Activated CD4-positive, alpha-beta T cell treated with anti-CD3 and anti-CD28 coated beads, Interleukin-2, amount 10 ng/mL, durations not matched to agents 24 days and 14 days (primary cell): ENCODE measurements at regions of chr12 and their contacts with region 1.

Region 1: GRCh38 chr12:96906849-96907670 is at the start of gene NEDD1:
- DNase-seq: peak; percentile 96
- H3K4me3 Mint-ChIP-seq: peak within 1 kb of the TSS; percentile 97
- H3K27ac Mint-ChIP-seq: peak within 1 kb of the TSS; percentile 98
- H3K4me1 Mint-ChIP-seq: peaks cover 44% of the 10 kb centered on the region
- H3K27me3 Mint-ChIP-seq: peaks cover 10% of the 10 kb centered on the region
- total RNA-seq, gene NEDD1: 58.8 and 62.7 TPM in 2 replicates

Region 2: GRCh38 chr12:95858479-95859343 is 1048.3 kb before region 1 on chr12 and contains the start of gene SNRPF:
- intact Hi-C with region 1: loop called (anchors 5 kb)
- DNase-seq: peak; percentile 98
- H3K4me3 Mint-ChIP-seq: peak within 1 kb of the TSS; percentile 41
- H3K27ac Mint-ChIP-seq: no peak within 1 kb of the TSS
- H3K4me1 Mint-ChIP-seq: peaks cover 17% of the 10 kb centered on the region
- H3K27me3 Mint-ChIP-seq: peaks cover 11% of the 10 kb centered on the region
- total RNA-seq, gene SNRPF: 64.3 and 68.8 TPM in 2 replicates

Region 3: DNA sequence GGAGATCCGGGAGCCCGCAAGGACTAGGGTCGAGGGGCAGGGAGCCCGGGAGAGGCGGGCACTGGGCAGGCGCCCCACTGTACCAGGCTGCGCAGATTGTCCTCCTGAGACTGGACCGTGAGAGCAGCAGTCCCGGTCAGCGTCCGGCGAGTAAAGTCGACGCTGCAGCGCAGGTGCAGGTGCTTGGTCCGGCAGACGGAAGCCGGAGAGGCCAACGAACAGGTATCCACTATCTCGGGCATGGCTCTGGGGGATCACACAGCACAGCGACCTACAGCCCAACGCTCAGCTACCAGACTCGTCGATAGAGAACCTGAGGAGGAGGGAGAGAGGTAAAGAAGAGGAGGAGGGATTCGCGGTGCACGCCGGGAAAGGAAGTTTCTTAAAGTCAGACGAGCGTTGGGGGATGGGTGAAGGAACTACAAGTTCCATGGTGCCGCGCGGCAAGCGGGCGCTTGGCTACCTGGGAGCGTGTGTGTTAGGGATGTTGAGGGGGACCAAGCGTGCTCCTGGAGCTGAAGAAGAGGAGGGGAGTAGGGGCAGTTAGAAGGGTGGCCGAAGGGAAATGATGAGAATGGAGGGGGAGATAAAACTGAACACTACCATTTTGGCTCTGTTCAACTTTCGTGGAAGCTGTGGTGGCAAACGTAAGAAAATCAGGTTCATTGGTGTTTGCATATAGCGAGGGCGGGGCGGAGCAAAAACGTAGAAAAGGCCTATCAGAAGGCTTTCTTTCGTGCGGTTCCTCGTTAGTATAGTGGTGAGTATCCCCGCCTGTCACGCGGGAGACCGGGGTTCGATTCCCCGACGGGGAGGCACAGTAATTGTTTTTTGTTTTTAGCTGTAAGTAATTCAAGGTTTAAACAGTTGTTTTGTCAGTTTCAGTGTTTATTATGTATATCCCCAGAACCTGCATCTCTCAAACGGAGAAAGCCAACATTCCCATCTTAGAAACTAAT is 871.5 kb before region 1 on chr12 and contains the start of gene LTA4H:
- intact Hi-C with region 1: loop called (anchors 1 kb)
- DNase-seq: peak; percentile 98
- H3K4me3 Mint-ChIP-seq: no peak within 1 kb of the TSS
- H3K27ac Mint-ChIP-seq: no peak within 1 kb of the TSS
- H3K4me1 Mint-ChIP-seq: peaks cover 6% of the 10 kb centered on the region
- H3K27me3 Mint-ChIP-seq: no peaks in the 10 kb centered on the region
- total RNA-seq, gene LTA4H: 63.4 and 64.1 TPM in 2 replicates

Region 4: GRCh38 chr12:96571101-96571862 is 335.8 kb before region 1 on chr12:
- intact Hi-C with region 1: loop called (anchors 2 kb)
- DNase-seq: peak; percentile 59
- H3K4me3 Mint-ChIP-seq: peak overlapping the region; percentile 44
- H3K27ac Mint-ChIP-seq: peak overlapping the region; percentile 81
- H3K4me1 Mint-ChIP-seq: peaks cover 16% of the 10 kb centered on the region
- H3K27me3 Mint-ChIP-seq: peaks cover 10% of the 10 kb centered on the region

Region 5: GRCh38 chr12:96985480-96986362 is 78.7 kb after region 1 on chr12:
- intact Hi-C with region 1: loop called (anchors 2 kb)
- DNase-seq: peak; percentile 83
- H3K4me3 Mint-ChIP-seq: peak overlapping the region; percentile 73
- H3K27ac Mint-ChIP-seq: no peak overlapping the region
- H3K4me1 Mint-ChIP-seq: peaks cover 2% of the 10 kb centered on the region
- H3K27me3 Mint-ChIP-seq: peaks cover 38% of the 10 kb centered on the region

Region 6: GRCh38 chr12:98503592-98504367 is 1596.7 kb after region 1 on chr12:
- intact Hi-C with region 1: loop called (anchors 5 kb)
- DNase-seq: peak; percentile 97
- H3K4me3 Mint-ChIP-seq: peak overlapping the region; percentile 92
- H3K27ac Mint-ChIP-seq: peak overlapping the region; percentile 99
- H3K4me1 Mint-ChIP-seq: peaks cover 26% of the 10 kb centered on the region
- H3K27me3 Mint-ChIP-seq: peaks cover 7% of the 10 kb centered on the region